Left colon (tissue), 2 donors: ENCODE measurements at regions of chr3 and their contacts with region 1.

Region 1: DNA sequence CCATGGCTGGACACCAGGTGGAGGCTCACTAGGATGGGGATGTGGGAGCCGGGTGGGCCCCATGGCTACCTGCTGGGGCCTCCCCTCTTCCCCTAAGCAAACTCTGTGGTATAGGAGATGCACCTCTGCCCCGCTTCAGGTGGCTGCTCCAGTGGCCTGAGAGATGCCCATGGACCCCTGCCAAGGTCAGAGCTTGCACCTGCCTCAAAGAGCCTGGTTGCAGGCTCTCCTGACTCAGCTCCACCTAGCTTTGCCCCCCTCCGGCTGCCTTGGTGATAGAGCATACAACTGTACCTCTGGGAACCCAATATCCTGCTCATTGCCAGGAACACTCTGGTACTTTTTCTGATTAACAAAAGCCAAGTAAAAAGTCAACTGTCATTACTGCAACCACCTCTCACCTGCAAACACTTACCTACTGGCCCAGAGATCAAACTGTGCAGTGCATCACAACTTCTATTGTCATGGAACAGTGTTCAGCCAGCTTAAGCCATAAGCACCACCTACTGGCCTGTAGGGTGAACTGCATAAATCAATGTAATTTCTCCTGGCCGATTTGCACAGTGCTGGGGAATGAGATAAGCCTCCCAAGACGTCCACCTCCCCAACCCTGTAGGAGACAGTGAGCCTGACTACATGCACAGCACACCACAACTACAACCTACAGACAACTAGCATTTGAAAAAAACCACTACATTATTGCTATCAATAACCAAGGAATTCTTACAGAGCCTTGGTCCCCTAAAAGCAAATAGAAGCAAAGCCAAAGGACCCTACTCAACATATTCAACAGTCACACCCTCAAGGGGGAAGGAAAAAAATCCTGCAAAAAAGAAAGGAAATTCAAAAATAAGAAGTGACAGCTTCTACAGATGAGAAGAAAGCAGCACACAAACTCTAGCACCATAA is 352.4 kb upstream of the ARHGEF26 start:
- DNase-seq: peak in 1 of 2 donors; percentile 25
- ATAC-seq: peak; percentile 99

Region 2: GRCh38 chr3:153026026-153026425 is 742.8 kb before region 1 on chr3:
- intact Hi-C with region 1: loop called in 1 of 2 experiments (anchors 10 kb)
- DNase-seq: no peak
- ATAC-seq: no peak

Region 3: DNA sequence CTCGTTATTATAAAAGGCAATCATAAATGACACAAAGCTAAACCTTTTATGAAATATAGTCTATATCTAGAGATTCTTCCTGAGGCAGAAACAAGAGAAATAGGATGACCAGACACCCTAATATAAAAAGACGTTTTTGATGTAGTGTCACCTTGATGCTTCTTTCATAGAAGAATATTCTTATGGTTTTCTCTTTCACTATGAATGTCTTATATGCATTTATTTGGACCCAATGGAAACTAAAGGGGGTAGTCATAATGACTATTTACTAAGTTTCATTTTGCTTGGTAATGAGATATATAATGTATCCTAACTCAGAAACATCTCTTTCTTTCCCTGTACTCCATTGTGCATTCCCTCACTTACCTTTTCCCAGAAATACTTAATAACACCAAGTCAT is 212.9 kb before region 1 on chr3:
- intact Hi-C with region 1: no loop called
- DNase-seq: no peak
- ATAC-seq: no peak